Activated CD4-positive, alpha-beta memory T cell treated with anti-CD3 and anti-CD28 coated beads for 36 hours (primary cell): ENCODE measurements at regions of chr12 and their contacts with region 1.

Region 1: DNA sequence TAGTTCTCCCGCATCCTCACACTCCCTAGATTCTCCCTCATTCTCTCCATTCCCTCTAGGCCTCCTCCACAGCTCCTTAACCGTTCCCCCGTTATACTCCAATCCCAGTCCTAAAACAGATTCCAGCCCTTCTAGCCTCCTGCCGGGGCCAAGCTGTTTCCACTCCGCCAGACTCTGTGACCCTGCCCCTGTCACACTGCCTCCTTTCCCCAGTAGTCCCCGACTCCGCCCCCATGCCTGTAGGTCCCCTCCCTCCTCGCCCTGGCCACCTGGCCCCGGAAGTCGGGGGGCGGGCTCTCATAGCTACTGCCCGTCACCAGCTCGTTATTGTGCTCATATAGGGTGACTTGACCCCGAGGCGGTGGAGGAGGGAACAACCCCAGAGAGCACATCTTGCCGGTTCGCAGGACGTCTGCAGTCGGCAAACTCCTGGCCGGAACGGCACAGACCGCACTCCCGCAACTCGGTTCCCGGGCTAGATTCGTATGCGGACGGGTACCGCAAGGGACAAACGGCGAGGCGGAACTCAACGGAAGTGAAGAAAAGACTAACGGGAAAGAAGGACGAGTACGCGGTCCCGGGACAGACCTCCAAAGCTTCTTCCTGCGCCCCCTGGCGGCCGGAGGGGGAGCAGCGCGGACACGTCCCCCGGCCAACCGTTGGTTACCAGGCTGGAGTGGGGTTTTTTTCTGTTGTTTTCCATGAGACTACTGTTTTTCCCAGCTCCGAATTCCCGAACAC is at the start of gene AAAS:
- DNase-seq: peak; percentile 98
- H3K4me3 Mint-ChIP-seq: peak within 1 kb of the TSS; percentile 86
- H3K27ac Mint-ChIP-seq: peak within 1 kb of the TSS; percentile 94
- H3K4me1 Mint-ChIP-seq: peaks cover 38% of the 10 kb centered on the region
- H3K27me3 Mint-ChIP-seq: no peaks in the 10 kb centered on the region
- total RNA-seq, gene AAAS: 74.5 to 80.7 TPM

Region 2: DNA sequence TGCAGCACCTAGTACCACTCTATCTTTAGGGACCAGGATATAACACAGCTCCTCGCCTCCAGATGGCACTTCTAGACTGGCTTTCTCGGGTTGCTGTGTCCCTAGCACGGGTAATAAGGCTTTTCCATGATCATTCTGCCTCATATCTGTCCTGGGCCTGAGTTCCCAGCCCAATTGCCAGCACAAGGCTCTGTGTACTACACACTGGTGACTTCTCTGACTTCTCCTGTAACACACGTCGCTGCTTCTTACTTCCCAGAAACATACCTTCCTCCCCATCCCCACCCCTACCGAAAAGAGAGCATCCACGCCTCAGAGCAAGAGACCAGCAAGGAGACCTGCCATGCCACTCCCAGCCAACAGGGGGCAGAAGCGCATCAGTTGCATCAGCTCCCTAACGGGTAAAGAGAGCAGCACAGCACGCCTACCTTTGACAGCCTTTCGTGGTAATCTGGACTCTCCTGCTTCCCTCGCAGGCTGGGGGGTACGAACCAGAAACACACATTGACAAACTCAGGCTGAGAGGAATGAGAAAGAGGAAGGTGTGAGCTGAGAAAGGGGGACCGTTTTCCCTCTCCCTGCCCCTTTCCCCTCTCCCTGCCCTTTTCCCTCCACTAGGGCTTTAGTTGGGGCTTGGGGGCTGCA is 161.9 kb before region 1 on chr12:
- CTCF ChIA-PET with region 1: interaction called, 65 read pairs
- POLR2A ChIA-PET with region 1: interaction called, 4 read pairs
- intact Hi-C with region 1: no loop called
- DNase-seq: peak; percentile 95
- H3K4me3 Mint-ChIP-seq: no peak overlapping the region
- H3K27ac Mint-ChIP-seq: no peak overlapping the region
- H3K4me1 Mint-ChIP-seq: peaks cover 6% of the 10 kb centered on the region
- H3K27me3 Mint-ChIP-seq: no peaks in the 10 kb centered on the region

Region 3: GRCh38 chr12:53213348-53213747 is 107.9 kb before region 1 on chr12:
- CTCF ChIA-PET with region 1: interaction called, 111 read pairs
- POLR2A ChIA-PET with region 1: interaction called, 4 read pairs
- intact Hi-C with region 1: loop called (anchors 1 kb)
- DNase-seq: peak; percentile 89
- H3K4me3 Mint-ChIP-seq: no peak overlapping the region
- H3K27ac Mint-ChIP-seq: no peak overlapping the region
- H3K4me1 Mint-ChIP-seq: peaks cover 61% of the 10 kb centered on the region
- H3K27me3 Mint-ChIP-seq: no peaks in the 10 kb centered on the region

Region 4: GRCh38 chr12:53295070-53295890 is 26.0 kb before region 1 on chr12 and contains the start of gene PFDN5:
- CTCF ChIA-PET with region 1: interaction called, 66 read pairs
- POLR2A ChIA-PET with region 1: interaction called, 19 read pairs
- intact Hi-C with region 1: loop called (anchors 1 kb)
- DNase-seq: peak; percentile 92
- H3K4me3 Mint-ChIP-seq: peak within 1 kb of the TSS; percentile 99
- H3K27ac Mint-ChIP-seq: peak within 1 kb of the TSS; percentile 94
- H3K4me1 Mint-ChIP-seq: peaks cover 53% of the 10 kb centered on the region
- H3K27me3 Mint-ChIP-seq: no peaks in the 10 kb centered on the region
- total RNA-seq, gene PFDN5: 354 to 359 TPM

Region 5: GRCh38 chr12:53379389-53380103 is 58.3 kb after region 1 on chr12:
- CTCF ChIA-PET with region 1: interaction called, 19 read pairs
- POLR2A ChIA-PET with region 1: interaction called, 7 read pairs
- intact Hi-C with region 1: loop called (anchors 1 kb)
- DNase-seq: peak; percentile 99
- H3K4me3 Mint-ChIP-seq: no peak overlapping the region
- H3K27ac Mint-ChIP-seq: no peak overlapping the region
- H3K4me1 Mint-ChIP-seq: peaks cover 36% of the 10 kb centered on the region
- H3K27me3 Mint-ChIP-seq: no peaks in the 10 kb centered on the region

Region 6: DNA sequence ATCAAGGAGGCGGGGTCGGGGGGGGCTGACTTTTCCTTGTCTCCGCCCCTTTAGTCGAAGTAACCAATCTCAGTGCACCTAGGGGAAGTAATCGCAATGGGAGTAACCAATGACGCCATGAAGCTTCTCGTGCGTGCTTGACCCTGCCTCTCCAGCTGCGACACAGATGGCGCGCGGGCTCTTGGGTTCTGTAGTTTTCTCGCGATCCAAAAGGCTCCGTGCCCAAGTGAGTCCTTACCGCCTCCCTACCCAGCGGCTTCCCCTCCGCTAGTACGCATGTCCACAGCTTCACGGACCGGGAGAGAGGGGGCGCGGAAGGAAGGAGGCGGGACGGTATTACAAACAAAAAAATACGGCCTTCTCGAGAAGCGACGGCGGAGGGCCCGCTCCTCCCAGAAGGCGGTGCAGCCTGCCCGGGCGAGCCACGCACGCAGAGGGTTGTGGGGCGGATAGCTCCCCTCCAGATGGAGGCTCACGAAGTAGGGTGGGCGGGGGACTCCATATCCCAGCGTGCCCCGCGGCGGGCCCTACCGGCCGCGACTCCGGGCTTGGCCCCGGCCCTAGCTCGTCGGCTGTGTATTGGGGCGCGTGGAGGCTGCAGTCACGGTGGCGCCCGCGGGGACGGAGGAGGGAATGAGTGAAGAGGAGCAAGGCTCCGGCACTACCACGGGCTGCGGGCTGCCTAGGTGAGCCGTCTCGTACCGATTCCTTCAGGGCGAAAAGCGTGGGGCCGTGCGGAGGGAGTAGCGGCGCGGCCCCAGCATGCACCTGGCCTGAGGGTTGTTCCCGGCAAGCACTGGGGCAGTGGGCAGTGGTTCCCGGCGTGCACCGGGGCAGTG is 179.8 kb after region 1 on chr12 and contains the start of gene TARBP2:
- CTCF ChIA-PET with region 1: interaction called, 15 read pairs
- POLR2A ChIA-PET with region 1: interaction called, 11 read pairs
- intact Hi-C with region 1: loop called (anchors 1 kb)
- DNase-seq: peak; percentile 96
- H3K4me3 Mint-ChIP-seq: peak within 1 kb of the TSS; percentile 84
- H3K27ac Mint-ChIP-seq: peak within 1 kb of the TSS; percentile 93
- H3K4me1 Mint-ChIP-seq: peaks cover 39% of the 10 kb centered on the region
- H3K27me3 Mint-ChIP-seq: no peaks in the 10 kb centered on the region
- total RNA-seq, gene TARBP2: 27.5 to 29.7 TPM